Breast epithelium (tissue), 4 donors: ENCODE measurements at regions of chr3 and their contacts with region 1.

Region 1: DNA sequence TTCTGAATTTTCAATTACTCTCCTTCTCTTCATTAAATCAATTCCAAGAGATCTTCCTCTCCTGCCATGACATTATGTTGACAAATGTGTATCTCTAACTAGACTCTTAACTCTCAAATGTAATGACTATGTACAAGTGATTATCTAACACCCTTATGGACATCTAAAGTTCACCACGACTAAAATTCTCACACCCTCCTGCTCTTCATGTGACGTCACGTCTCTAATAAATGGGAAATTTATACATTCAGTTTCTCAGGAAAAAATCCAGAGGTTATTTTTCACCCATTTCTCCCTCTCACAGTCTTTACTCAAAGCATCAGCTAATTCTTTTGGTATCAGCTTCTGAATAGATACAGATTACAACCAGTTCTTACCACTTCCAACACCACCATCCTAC is 237.5 kb upstream of the EPHA6 start:
- DNase-seq: no peak
- H3K4me3 ChIP-seq: no peak overlapping the region
- H3K27ac ChIP-seq: no peak overlapping the region
- H3K4me1 ChIP-seq: no peaks in the 10 kb centered on the region
- H3K27me3 ChIP-seq: no peaks in the 10 kb centered on the region
- CTCF ChIP-seq: no peak
- POLR2A ChIP-seq: no peak

Region 2: DNA sequence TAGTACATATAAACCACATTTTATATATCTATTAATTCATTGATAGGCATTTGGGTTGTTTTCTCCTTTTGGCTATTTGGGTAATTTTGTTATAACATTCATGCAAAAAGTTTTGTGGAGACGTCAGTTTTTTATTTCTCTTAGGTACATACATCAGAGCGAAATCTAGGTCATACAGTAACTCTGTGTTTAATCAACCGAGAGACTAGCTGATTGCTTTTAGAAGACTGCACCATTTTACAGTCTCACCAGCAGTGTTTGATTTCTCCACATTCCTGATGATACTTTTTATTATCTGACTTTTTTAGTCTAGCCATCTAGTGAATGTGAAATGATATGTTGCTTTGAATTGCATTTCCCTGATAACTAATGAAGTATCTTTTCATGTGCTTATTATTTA is 1494.7 kb before region 1 on chr3:
- intact Hi-C with region 1: loop called (anchors 5 kb)
- DNase-seq: no peak
- H3K4me3 ChIP-seq: no peak overlapping the region
- H3K27ac ChIP-seq: no peak overlapping the region
- H3K4me1 ChIP-seq: no peaks in the 10 kb centered on the region
- H3K27me3 ChIP-seq: no peaks in the 10 kb centered on the region
- CTCF ChIP-seq: no peak
- POLR2A ChIP-seq: no peak

Region 3: DNA sequence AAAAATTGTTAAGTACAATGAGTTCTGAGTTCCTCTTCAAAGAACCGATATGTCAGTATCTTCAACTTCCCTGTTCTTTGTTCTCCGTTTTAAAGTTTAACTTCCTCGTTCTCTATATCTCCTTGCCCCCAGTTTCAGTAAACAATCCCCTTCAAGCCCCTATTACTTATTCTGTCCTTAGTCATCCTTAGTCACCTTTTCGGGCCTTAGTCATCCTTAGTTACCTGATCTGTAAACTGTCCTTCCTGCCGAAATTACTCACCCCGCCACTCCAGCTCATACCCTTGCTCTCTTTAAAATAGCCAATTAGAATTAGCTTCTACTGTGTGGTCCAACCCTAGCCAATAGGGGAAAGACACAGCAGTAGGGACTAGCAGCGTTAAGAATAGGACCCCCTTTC is 1348.5 kb before region 1 on chr3:
- intact Hi-C with region 1: loop called (anchors 5 kb)
- DNase-seq: no peak
- H3K4me3 ChIP-seq: no peak overlapping the region
- H3K27ac ChIP-seq: no peak overlapping the region
- H3K4me1 ChIP-seq: no peaks in the 10 kb centered on the region
- H3K27me3 ChIP-seq: no peaks in the 10 kb centered on the region
- CTCF ChIP-seq: no peak
- POLR2A ChIP-seq: no peak